Aorta (tissue), 5 donors: ENCODE measurements at regions of chr17 and their contacts with region 1.

Region 1: GRCh38 chr17:30970831-30971567 is at the start of gene RNF135:
- DNase-seq: peak; percentile 92 to 94
- ATAC-seq: peak; percentile 95
- H3K4me3 ChIP-seq: peak within 1 kb of the TSS; percentile 71 to 78
- H3K27ac ChIP-seq: peak within 1 kb of the TSS; percentile 62 to 86
- H3K4me1 ChIP-seq: no peaks in the 10 kb centered on the region
- H3K27me3 ChIP-seq: no peaks in the 10 kb centered on the region
- total RNA-seq, gene RNF135: 18.8 to 32.4 TPM

Region 2: DNA sequence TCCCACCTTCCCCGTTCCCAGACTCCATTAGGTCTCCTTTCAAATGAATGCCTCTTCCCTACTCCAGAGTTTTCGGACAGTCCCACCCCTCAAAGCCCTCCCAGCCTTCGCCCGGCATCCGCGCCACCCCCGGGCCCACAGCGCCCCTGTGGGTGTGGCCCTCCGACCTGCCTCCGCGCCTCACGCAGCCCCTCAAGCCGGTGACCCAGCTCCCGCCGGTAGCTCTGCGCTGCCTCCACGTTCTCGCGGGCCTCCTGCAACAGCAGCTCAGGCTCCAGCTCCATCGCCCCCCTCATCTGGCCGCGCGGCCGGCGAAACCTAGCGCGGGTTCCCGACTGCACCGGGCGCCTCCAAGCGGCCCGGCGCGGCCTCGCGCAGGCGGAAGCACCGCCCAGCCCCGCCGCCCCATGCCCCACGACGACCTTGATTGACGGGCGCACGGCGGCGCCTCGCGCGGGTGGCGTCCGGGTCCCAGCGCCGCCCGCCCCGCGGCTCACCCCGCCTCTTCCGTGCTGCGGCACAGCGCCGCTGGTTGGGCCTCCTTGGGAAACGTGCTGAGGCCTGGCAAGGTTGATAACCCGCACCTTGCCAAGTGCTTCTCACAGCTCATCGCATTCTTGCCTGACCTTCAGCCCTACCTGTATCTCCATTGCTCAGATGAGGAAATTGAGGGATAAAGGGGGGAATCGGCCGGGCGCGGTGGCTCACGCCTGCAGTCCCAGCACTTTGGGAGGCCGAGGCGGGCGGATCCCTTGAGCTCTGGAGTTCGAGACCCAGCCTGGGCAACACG is 146.4 kb before region 1 on chr17 and contains the start of gene CRLF3:
- intact Hi-C with region 1: loop called in 1 of 2 experiments (anchors 10 kb)
- DNase-seq: peak; percentile 93 to 96
- ATAC-seq: peak; percentile 98
- H3K4me3 ChIP-seq: peak within 1 kb of the TSS; percentile 67 to 81
- H3K27ac ChIP-seq: peak within 1 kb of the TSS in 1 of 2 donors; percentile 17
- H3K4me1 ChIP-seq: no peaks in the 10 kb centered on the region
- H3K27me3 ChIP-seq: no peaks in the 10 kb centered on the region
- total RNA-seq, gene CRLF3: 11.3 to 19.0 TPM

Region 3: GRCh38 chr17:30939051-30939689 is 31.8 kb before region 1 on chr17:
- intact Hi-C with region 1: no loop called
- DNase-seq: peak in 1 of 2 donors; percentile 5
- ATAC-seq: no peak
- H3K4me3 ChIP-seq: no peak overlapping the region
- H3K27ac ChIP-seq: no peak overlapping the region
- H3K4me1 ChIP-seq: no peaks in the 10 kb centered on the region
- H3K27me3 ChIP-seq: no peaks in the 10 kb centered on the region